Activated CD8-positive, alpha-beta T cell treated with anti-CD3 and anti-CD28 coated beads, Interleukin-2, amount 10 ng/mL, durations not matched to agents 7 days and 5 days (primary cell): ENCODE measurements at regions of chr18 and their contacts with region 1.

Region 1: DNA sequence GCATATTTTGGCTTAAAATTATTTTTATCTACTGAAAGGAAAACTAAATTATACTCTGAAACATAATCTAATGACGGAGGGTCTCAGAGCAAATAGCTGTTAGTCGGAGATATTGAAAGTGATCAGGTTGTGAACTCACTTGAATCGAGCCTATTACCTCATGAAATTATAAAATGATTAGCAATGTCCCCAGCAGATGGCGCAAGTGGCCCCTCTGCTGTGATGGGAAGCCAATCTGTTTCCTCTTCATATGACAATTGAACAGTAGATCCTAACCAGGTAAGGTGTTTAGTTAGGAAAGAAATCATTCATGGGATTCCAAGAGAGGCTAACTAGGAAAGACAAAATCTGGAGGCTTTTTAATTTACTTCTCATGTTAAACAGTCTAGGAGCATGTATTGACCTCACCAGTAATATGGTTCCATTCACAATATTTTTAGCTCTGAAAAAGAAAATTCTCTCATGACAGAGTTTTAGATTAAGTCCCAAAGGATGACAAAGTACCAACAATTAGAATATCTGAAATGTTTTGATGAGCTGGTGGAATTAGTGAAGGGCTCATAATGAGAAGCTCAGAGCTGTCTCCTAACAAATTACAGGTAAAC is 29.9 kb upstream of the MPPE1 start:
- DNase-seq: peak; percentile 82
- ATAC-seq: peak; percentile 69
- H3K4me3 Mint-ChIP-seq: no peak overlapping the region
- H3K27ac Mint-ChIP-seq: no peak overlapping the region
- H3K4me1 Mint-ChIP-seq: no peaks in the 10 kb centered on the region
- H3K27me3 Mint-ChIP-seq: no peaks in the 10 kb centered on the region

Region 2: GRCh38 chr18:11752116-11752911 is 185.7 kb before region 1 on chr18:
- CTCF ChIA-PET with region 1: no interaction called
- POLR2A ChIA-PET with region 1: no interaction called
- DNase-seq: no peak
- ATAC-seq: peak; percentile 73
- H3K4me3 Mint-ChIP-seq: peak overlapping the region; percentile 58
- H3K27ac Mint-ChIP-seq: no peak overlapping the region
- H3K4me1 Mint-ChIP-seq: peaks cover 5% of the 10 kb centered on the region
- H3K27me3 Mint-ChIP-seq: peaks cover 47% of the 10 kb centered on the region

Region 3: DNA sequence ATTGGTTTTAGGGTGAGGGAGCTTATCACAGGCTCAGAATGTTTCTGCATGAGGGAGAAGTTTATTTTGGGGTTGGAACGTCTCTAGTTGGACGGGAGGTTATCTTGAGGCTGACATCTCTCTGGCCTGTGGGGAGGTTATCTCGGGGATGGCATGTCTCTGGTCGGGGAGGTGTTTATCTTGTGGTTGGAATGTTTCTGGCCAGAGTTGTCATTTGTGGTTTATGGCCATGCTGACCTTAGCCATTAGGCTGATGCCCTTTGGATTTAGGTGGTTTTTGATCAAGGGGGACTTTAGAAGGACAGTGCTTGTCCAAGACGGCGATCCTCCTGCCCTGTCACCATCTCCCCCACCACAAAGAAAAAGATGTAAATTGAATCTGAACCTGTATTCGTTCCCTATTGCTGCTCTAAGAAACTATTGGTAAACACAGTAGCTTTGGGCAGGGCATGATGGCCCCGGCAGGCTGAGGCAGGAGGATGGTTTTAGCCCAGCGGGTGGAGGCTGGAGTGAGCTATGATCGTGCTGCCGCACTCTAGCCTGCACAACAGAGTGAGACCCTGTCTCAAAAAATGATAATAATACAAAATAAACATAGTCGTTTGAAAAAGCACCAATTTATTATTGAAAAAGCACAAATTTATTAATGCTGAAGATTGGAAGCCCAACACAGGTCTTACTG is 12.0 kb before region 1 on chr18:
- CTCF ChIA-PET with region 1: interaction called, 29 read pairs
- POLR2A ChIA-PET with region 1: no interaction called
- DNase-seq: no peak
- ATAC-seq: no peak
- H3K4me3 Mint-ChIP-seq: no peak overlapping the region
- H3K27ac Mint-ChIP-seq: no peak overlapping the region
- H3K4me1 Mint-ChIP-seq: no peaks in the 10 kb centered on the region
- H3K27me3 Mint-ChIP-seq: peaks cover 4% of the 10 kb centered on the region

Region 4: DNA sequence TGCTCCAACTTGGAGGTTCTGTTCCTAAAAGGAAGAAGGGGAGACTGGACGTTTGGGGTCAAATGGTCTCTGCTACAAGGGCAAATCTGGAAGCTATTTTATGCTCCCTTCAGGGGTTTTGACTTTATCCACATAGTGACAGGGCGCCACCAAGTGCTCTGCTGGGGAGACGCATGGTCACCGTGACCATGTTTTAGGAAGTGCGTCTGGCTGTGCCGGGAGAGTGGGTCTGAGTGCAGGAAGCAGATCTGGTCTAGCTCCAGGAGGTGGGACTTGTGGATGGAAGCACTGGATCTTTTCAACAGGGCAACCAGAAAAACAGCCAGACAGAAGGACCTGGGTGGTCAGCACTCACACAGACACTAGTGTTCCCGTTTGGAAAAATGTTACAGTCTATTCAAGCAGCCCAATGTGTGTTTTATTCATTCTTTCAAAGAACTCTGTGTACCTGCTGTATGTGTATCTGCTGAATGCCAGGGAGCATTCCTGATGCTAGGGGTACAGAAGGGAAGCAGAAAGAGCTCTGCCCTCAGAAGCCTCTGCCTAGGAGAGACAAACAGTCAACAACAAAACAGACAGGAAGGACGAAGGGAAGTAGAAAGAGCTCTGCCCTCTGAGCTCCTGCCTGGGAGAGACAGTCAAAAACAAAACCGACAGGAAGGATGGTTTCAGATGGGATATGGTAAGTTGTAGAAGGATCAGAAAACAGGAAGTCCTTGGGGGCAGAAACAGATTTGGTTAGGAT is 57.6 kb after region 1 on chr18:
- CTCF ChIA-PET with region 1: interaction called, 282 read pairs
- POLR2A ChIA-PET with region 1: interaction called, 3 read pairs
- DNase-seq: peak; percentile 68
- ATAC-seq: peak; percentile 83
- H3K4me3 Mint-ChIP-seq: no peak overlapping the region
- H3K27ac Mint-ChIP-seq: peak overlapping the region; percentile 53
- H3K4me1 Mint-ChIP-seq: peaks cover 19% of the 10 kb centered on the region
- H3K27me3 Mint-ChIP-seq: no peaks in the 10 kb centered on the region

Region 5: GRCh38 chr18:12017081-12017480 is 79.1 kb after region 1 on chr18:
- CTCF ChIA-PET with region 1: interaction called, 11 read pairs
- POLR2A ChIA-PET with region 1: no interaction called
- DNase-seq: no peak
- ATAC-seq: no peak
- H3K4me3 Mint-ChIP-seq: no peak overlapping the region
- H3K27ac Mint-ChIP-seq: no peak overlapping the region
- H3K4me1 Mint-ChIP-seq: no peaks in the 10 kb centered on the region
- H3K27me3 Mint-ChIP-seq: no peaks in the 10 kb centered on the region

Region 6: DNA sequence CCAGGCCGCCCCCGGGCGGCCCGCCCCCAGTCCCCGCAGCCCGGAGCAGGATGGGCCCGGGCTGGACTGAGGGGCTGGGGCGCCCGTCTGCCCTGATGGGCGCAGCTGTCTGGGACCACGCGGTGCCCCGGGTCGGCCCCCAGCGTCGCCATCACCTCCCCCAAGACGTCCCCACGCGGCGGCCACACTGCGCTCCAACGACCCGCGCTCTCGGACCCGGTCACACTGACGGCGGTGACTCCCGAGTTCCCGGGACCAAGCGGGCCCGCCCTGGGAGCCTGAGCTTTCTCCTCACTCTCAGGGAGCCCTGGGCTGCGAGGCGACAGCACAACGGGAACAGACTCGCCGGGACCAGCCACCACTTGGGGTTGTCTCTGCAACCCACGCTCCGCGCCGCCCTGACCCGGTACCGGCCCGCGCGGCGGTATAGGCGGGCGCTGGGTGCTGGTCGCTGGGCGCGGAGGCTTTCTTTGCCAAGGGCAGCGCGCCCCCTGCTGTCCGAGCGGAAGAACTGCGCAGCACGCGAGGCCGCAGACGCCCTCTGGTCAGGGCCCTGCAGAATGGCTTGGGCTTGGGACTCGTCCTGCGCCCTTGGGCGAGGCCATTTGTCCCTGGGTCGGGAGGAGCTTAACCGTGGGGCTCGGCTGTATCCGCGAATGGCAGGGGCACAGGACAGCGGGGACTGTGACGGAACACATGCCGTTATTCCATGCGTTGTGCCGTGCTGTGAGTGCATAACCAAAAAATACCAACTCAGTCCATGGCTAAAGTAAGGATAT is 100.9 kb after region 1 on chr18:
- CTCF ChIA-PET with region 1: interaction called, 72 read pairs
- POLR2A ChIA-PET with region 1: interaction called, 5 read pairs
- DNase-seq: peak; percentile 77
- ATAC-seq: peak; percentile 93
- H3K4me3 Mint-ChIP-seq: peak overlapping the region; percentile 40
- H3K27ac Mint-ChIP-seq: no peak overlapping the region
- H3K4me1 Mint-ChIP-seq: peaks cover 1% of the 10 kb centered on the region
- H3K27me3 Mint-ChIP-seq: peaks cover 16% of the 10 kb centered on the region

Region 7: GRCh38 chr18:12092398-12093229 is 154.6 kb after region 1 on chr18:
- CTCF ChIA-PET with region 1: no interaction called
- POLR2A ChIA-PET with region 1: no interaction called
- DNase-seq: no peak
- ATAC-seq: no peak
- H3K4me3 Mint-ChIP-seq: no peak overlapping the region
- H3K27ac Mint-ChIP-seq: no peak overlapping the region
- H3K4me1 Mint-ChIP-seq: no peaks in the 10 kb centered on the region
- H3K27me3 Mint-ChIP-seq: peaks cover 9% of the 10 kb centered on the region

Region 8: GRCh38 chr18:12485479-12486105 is 547.6 kb after region 1 on chr18:
- CTCF ChIA-PET with region 1: no interaction called
- POLR2A ChIA-PET with region 1: no interaction called
- DNase-seq: no peak
- ATAC-seq: no peak
- H3K4me3 Mint-ChIP-seq: no peak overlapping the region
- H3K27ac Mint-ChIP-seq: no peak overlapping the region
- H3K4me1 Mint-ChIP-seq: peaks cover 7% of the 10 kb centered on the region
- H3K27me3 Mint-ChIP-seq: peaks cover 5% of the 10 kb centered on the region